ENCODE measurements at regions of chrX and their contacts with region 1.

Region 1: DNA sequence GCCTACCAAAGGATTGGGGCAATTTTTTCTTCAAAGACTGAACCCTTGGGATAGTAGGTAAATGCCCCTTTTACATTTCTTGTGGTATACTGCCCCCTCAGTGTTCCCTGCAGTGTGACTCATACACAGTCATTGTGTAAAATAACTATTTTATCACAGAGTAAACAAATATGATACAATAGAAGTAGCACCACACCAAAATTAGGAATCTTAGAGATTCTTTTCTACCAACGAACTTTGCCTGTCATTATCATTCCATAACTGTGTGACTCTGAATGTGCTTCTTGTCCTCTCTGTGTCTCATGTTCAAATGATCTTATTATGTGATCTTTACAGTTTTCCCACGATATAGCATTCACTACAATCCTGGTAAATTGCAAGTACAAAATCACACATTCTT is 517.0 kb downstream of the ZIC3 start:
- DNase-seq: peak; percentile 87
- ATAC-seq: peak; percentile 83
- H3K4me3 ChIP-seq: 0 out of 2 replicates have a peak overlapping the region, but pooled peaks have one; percentile 9
- H3K27ac ChIP-seq: peak overlapping the region; percentile 93
- H3K4me1 ChIP-seq: peaks cover 27% of the 10 kb centered on the region
- H3K27me3 ChIP-seq: no peaks in the 10 kb centered on the region
- CTCF ChIP-seq: no peak

Region 2: DNA sequence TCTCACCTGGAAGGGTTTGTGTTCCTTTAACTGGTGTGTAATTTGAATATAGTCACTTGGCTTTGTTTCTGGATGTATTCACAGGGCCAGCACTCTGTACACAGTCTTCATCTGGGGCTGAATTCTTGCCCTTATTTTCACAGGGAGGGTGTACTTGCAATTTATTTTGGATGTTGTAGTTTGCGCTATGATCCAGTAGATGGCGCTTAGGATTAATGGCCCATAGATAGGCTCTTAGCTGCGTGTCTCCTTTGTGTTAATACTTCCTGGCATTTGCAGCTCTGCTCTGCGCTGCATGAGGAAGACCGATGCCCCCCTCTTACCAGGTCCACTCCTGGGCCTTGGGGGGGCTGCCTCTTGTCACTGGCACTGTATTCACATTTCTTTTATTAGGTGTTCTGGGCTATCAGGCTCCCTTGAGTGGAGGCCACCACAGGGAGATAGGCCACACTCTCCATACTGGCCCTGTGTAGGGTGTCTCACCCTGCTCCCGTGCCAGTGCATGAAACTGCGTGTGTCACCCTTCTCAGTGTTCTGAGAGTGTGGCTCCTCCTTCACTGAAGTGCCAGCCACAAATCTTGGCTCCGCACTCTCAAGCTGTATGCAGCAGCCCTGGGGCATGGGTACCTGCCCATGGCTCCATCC is 45.3 kb after region 1 on chrX:
- CTCF ChIA-PET with region 1: no interaction called
- POLR2A ChIA-PET with region 1: interaction called, 6 read pairs
- intact Hi-C with region 1: loop called (anchors 2 kb)
- DNase-seq: peak; percentile 75
- ATAC-seq: peak; percentile 79
- H3K4me3 ChIP-seq: peak overlapping the region; percentile 46
- H3K27ac ChIP-seq: peak overlapping the region; percentile 89
- H3K4me1 ChIP-seq: peaks cover 20% of the 10 kb centered on the region
- H3K27me3 ChIP-seq: no peaks in the 10 kb centered on the region
- CTCF ChIP-seq: peak; percentile 72